Activated naive CD8-positive, alpha-beta T cell treated with anti-CD3 and anti-CD28 coated beads, Interleukin-2, amount 10 ng/mL, durations not matched to agents 7 days and 5 days (primary cell): ENCODE measurements at regions of chr9 and their contacts with region 1.

Region 1: GRCh38 chr9:128552153-128552743 is at the start of gene SPTAN1:
- DNase-seq: peak; percentile 97
- ATAC-seq: peak; percentile 84
- H3K4me3 Mint-ChIP-seq: peak within 1 kb of the TSS; percentile 91
- H3K27ac Mint-ChIP-seq: peak within 1 kb of the TSS; percentile 93
- H3K4me1 Mint-ChIP-seq: peaks cover 29% of the 10 kb centered on the region
- H3K27me3 Mint-ChIP-seq: no peaks in the 10 kb centered on the region
- total RNA-seq, gene SPTAN1: 355 to 358 TPM

Region 2: GRCh38 chr9:128504485-128505413 is 47.5 kb before region 1 on chr9 and contains the start of gene GLE1:
- POLR2A ChIA-PET with region 1: interaction called, 16 read pairs
- DNase-seq: peak; percentile 100
- ATAC-seq: peak; percentile 95
- H3K4me3 Mint-ChIP-seq: peak within 1 kb of the TSS; percentile 100
- H3K27ac Mint-ChIP-seq: peak within 1 kb of the TSS; percentile 99
- H3K4me1 Mint-ChIP-seq: peaks cover 21% of the 10 kb centered on the region
- H3K27me3 Mint-ChIP-seq: no peaks in the 10 kb centered on the region
- total RNA-seq, gene GLE1: 39.3 to 41.6 TPM

Region 3: DNA sequence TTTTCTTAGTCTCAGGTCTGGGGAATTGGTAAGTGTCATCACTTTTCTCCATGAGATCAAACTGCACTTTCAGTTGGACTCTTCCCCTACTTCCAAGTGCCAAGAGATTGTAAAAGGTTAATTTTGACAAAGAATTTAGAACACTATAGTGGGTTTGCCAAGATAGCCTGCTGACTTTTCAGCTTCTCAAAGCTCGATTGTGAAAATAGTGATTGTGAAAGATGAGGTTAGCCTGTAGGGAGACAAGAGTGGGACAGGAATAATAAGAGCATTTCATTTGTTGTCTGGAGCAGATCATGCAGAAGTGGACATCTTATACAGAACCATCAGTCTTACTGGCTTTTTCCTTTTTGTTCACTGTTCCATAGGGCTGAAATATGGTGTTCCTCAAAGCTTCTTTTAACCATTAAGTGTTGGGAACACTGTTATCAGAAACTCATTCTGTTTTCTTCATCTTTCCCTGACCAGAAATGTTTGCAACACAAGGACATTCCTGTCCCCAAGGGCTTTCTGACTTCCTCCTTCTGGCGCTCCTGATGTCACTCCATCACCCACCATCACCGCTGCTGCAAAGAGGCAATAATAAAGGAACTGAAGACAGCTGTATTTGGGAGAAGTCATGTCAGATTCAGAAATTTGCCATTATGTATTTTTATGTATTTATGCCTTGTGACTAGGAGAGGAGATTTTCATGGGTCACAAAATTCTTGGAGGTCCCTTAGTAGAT is 11.5 kb before region 1 on chr9:
- POLR2A ChIA-PET with region 1: interaction called, 30 read pairs
- DNase-seq: no peak
- ATAC-seq: no peak
- H3K4me3 Mint-ChIP-seq: no peak overlapping the region
- H3K27ac Mint-ChIP-seq: no peak overlapping the region
- H3K4me1 Mint-ChIP-seq: peaks cover 2% of the 10 kb centered on the region
- H3K27me3 Mint-ChIP-seq: no peaks in the 10 kb centered on the region

Region 4: GRCh38 chr9:128643519-128644300 is 91.5 kb after region 1 on chr9:
- POLR2A ChIA-PET with region 1: no interaction called
- DNase-seq: no peak
- ATAC-seq: no peak
- H3K4me3 Mint-ChIP-seq: no peak overlapping the region
- H3K27ac Mint-ChIP-seq: no peak overlapping the region
- H3K4me1 Mint-ChIP-seq: peaks cover 7% of the 10 kb centered on the region
- H3K27me3 Mint-ChIP-seq: no peaks in the 10 kb centered on the region

Region 5: GRCh38 chr9:128723866-128724743 is 171.9 kb after region 1 on chr9 and contains the start of gene ZDHHC12:
- POLR2A ChIA-PET with region 1: interaction called, 14 read pairs
- DNase-seq: peak; percentile 99
- ATAC-seq: peak; percentile 99
- H3K4me3 Mint-ChIP-seq: peak within 1 kb of the TSS; percentile 91
- H3K27ac Mint-ChIP-seq: peak within 1 kb of the TSS; percentile 89
- H3K4me1 Mint-ChIP-seq: peaks cover 32% of the 10 kb centered on the region
- H3K27me3 Mint-ChIP-seq: no peaks in the 10 kb centered on the region
- total RNA-seq, gene ZDHHC12: 64.1 to 68.9 TPM